Naive thymus-derived CD4-positive, alpha-beta T cell (primary cell): ENCODE measurements at regions of chr1 and their contacts with region 1.

Region 1: GRCh38 chr1:54488779-54489626 is 59.0 kb upstream of the ACOT11 start:
- DNase-seq: peak; percentile 54 to 88 (median 73)
- ATAC-seq: peak; percentile 82
- H3K4me3 ChIP-seq: peak overlapping the region; percentile 83
- H3K4me3 Mint-ChIP-seq: peak overlapping the region; percentile 85 to 95 (median 90)
- H3K27ac ChIP-seq: peak overlapping the region; percentile 75
- H3K27ac Mint-ChIP-seq: peak overlapping the region; percentile 51 to 93 (median 78)
- H3K4me1 ChIP-seq: peaks cover 25 to 33% of the 10 kb centered on the region in 2 donors
- H3K4me1 Mint-ChIP-seq: peaks cover 26 to 55% (median 41%) of the 10 kb centered on the region in 7 donors
- H3K27me3 ChIP-seq: no peaks in the 10 kb centered on the region
- H3K27me3 Mint-ChIP-seq: peaks cover 0 to 38% (median 0%) of the 10 kb centered on the region in 5 donors

Region 2: GRCh38 chr1:53837924-53838652 is 650.9 kb before region 1 on chr1 and contains the start of gene NDC1:
- CTCF ChIA-PET with region 1: no interaction called
- POLR2A ChIA-PET with region 1: no interaction called
- intact Hi-C with region 1: loop called in 1 of 2 experiments (anchors 5 kb)
- DNase-seq: peak; percentile 84 to 95 (median 92)
- ATAC-seq: peak; percentile 95
- H3K4me3 ChIP-seq: peak within 1 kb of the TSS; percentile 92
- H3K4me3 Mint-ChIP-seq: peak within 1 kb of the TSS; percentile 96 to 100 (median 99)
- H3K27ac ChIP-seq: peak within 1 kb of the TSS; percentile 95
- H3K27ac Mint-ChIP-seq: peak within 1 kb of the TSS; percentile 96 to 99 (median 98)
- H3K4me1 ChIP-seq: no peaks in the 10 kb centered on the region
- H3K4me1 Mint-ChIP-seq: peaks cover 10 to 41% (median 30%) of the 10 kb centered on the region in 7 donors
- H3K27me3 ChIP-seq: no peaks in the 10 kb centered on the region
- H3K27me3 Mint-ChIP-seq: no peaks in the 10 kb centered on the region
- total RNA-seq, gene NDC1: 6.9 to 20.2 (median 13.2) TPM

Region 3: GRCh38 chr1:54052934-54053744 is 435.9 kb before region 1 on chr1 and contains the starts of genes TCEANC2 and TMEM59:
- CTCF ChIA-PET with region 1: no interaction called
- POLR2A ChIA-PET with region 1: no interaction called
- intact Hi-C with region 1: loop called (anchors 1 kb)
- DNase-seq: peak; percentile 84 to 99 (median 98)
- ATAC-seq: peak; percentile 94
- H3K4me3 ChIP-seq: peak within 1 kb of the TSS; percentile 94
- H3K4me3 Mint-ChIP-seq: no peak within 1 kb of the TSS
- H3K27ac ChIP-seq: peak within 1 kb of the TSS; percentile 92
- H3K27ac Mint-ChIP-seq: no peak within 1 kb of the TSS
- H3K4me1 ChIP-seq: peaks cover 23 to 34% of the 10 kb centered on the region in 2 donors
- H3K4me1 Mint-ChIP-seq: peaks cover 27 to 62% (median 52%) of the 10 kb centered on the region in 7 donors
- H3K27me3 ChIP-seq: no peaks in the 10 kb centered on the region
- H3K27me3 Mint-ChIP-seq: no peaks in the 10 kb centered on the region
- total RNA-seq, gene TCEANC2: 6.3 to 15.1 (median 12.2) TPM
- total RNA-seq, gene TMEM59: 127 to 197 (median 183) TPM

Region 4: DNA sequence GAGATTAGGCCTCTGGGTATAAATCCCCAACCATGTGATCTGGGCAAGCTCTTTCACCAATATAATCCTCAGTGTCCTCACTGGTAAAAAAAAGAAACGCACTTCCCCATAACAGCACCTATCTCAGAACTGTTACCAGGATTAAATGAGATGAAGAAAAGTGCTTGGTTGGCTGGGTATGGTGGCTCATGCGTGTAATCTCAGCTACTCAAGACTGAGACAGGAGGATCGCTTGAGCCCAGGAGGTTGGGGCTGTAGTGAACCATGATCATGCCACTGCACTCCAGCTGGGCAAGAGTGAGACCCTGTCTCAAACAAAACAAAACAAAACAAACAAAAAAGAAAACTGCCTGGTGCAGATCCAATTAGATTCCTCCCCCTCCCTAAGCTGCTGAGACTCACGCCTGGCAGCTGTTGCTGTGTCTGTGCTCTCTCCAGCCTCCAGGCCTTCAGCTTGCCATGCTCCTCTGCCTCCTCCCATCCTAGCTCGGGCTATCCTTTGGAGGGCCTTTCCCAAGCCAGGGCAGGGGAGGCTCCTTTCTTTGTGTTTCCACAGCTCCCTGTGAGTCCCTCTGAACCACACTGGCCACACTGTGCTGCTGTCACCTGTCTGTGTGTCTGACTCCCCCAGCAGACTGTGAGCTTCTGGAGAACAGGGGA is 308.2 kb before region 1 on chr1:
- CTCF ChIA-PET with region 1: interaction called, 8 read pairs
- POLR2A ChIA-PET with region 1: no interaction called
- intact Hi-C with region 1: loop called (anchors 1 to 5 kb)
- DNase-seq: no peak
- ATAC-seq: no peak
- H3K4me3 ChIP-seq: no peak overlapping the region
- H3K4me3 Mint-ChIP-seq: no peak overlapping the region
- H3K27ac ChIP-seq: no peak overlapping the region
- H3K27ac Mint-ChIP-seq: peak overlapping the region in 1 of 9 donors; percentile 17
- H3K4me1 ChIP-seq: no peaks in the 10 kb centered on the region
- H3K4me1 Mint-ChIP-seq: no peaks in the 10 kb centered on the region
- H3K27me3 ChIP-seq: no peaks in the 10 kb centered on the region
- H3K27me3 Mint-ChIP-seq: no peaks in the 10 kb centered on the region

Region 5: DNA sequence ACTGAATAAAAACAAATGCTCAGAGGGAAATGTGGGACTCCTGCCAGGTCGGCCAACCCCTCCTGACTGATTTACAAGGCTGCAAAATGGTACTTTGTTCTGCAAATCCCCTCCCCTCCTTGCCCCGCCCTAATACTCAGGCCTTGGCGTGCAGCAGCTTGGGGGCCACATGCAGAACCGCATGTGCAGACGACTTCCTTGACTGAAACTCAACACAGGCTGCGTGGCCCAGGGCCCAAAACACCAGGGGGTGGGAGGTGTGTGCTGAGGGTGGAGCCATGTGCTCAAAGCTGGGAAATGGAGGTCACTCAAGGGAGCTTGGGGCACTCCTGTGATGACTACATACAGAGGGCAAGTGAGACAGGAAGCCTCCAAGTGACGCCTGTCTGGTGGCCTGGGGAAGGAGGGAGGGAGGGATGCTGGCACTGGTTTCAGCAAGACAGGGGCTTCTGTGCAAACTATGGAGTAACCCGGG is 201.8 kb before region 1 on chr1:
- CTCF ChIA-PET with region 1: interaction called, 4 read pairs
- POLR2A ChIA-PET with region 1: interaction called, 8 read pairs
- intact Hi-C with region 1: loop called (anchors 1 to 2 kb)
- DNase-seq: peak; percentile 21 to 82 (median 73)
- ATAC-seq: peak; percentile 76
- H3K4me3 ChIP-seq: peak overlapping the region; percentile 21
- H3K4me3 Mint-ChIP-seq: peak overlapping the region; percentile 79 to 90 (median 87)
- H3K27ac ChIP-seq: peak overlapping the region; percentile 85
- H3K27ac Mint-ChIP-seq: peak overlapping the region; percentile 87 to 99 (median 96)
- H3K4me1 ChIP-seq: peaks cover 6 to 90% of the 10 kb centered on the region in 2 donors
- H3K4me1 Mint-ChIP-seq: peaks cover 59 to 100% (median 94%) of the 10 kb centered on the region in 7 donors
- H3K27me3 ChIP-seq: no peaks in the 10 kb centered on the region
- H3K27me3 Mint-ChIP-seq: no peaks in the 10 kb centered on the region

Region 6: GRCh38 chr1:54464482-54465146 is 24.4 kb before region 1 on chr1:
- CTCF ChIA-PET with region 1: interaction called, 3 read pairs
- POLR2A ChIA-PET with region 1: interaction called, 8 read pairs
- intact Hi-C with region 1: loop called in 1 of 2 experiments (anchors 1 kb)
- DNase-seq: no peak
- ATAC-seq: peak; percentile 23
- H3K4me3 ChIP-seq: no peak overlapping the region
- H3K4me3 Mint-ChIP-seq: no peak overlapping the region
- H3K27ac ChIP-seq: no peak overlapping the region
- H3K27ac Mint-ChIP-seq: peak overlapping the region in 2 of 9 donors; percentile 8 to 13
- H3K4me1 ChIP-seq: peaks cover 27 to 31% of the 10 kb centered on the region in 2 donors
- H3K4me1 Mint-ChIP-seq: peaks cover 8 to 51% (median 41%) of the 10 kb centered on the region in 7 donors
- H3K27me3 ChIP-seq: no peaks in the 10 kb centered on the region
- H3K27me3 Mint-ChIP-seq: peaks cover 0 to 4% (median 0%) of the 10 kb centered on the region in 5 donors

Region 7: GRCh38 chr1:54604572-54605370 is 115.8 kb after region 1 on chr1:
- CTCF ChIA-PET with region 1: no interaction called
- POLR2A ChIA-PET with region 1: no interaction called
- intact Hi-C with region 1: no loop called
- DNase-seq: peak in 8 of 9 donors; percentile 15 to 47 (median 41)
- ATAC-seq: peak; percentile 52
- H3K4me3 ChIP-seq: no peak overlapping the region
- H3K4me3 Mint-ChIP-seq: peak overlapping the region in 6 of 10 donors; percentile 18 to 56 (median 41)
- H3K27ac ChIP-seq: no peak overlapping the region
- H3K27ac Mint-ChIP-seq: peak overlapping the region; percentile 33 to 86 (median 75)
- H3K4me1 ChIP-seq: peaks cover 0 to 14% of the 10 kb centered on the region in 2 donors
- H3K4me1 Mint-ChIP-seq: peaks cover 12 to 19% (median 15%) of the 10 kb centered on the region in 7 donors
- H3K27me3 ChIP-seq: no peaks in the 10 kb centered on the region
- H3K27me3 Mint-ChIP-seq: no peaks in the 10 kb centered on the region

Region 8: GRCh38 chr1:54764133-54764921 is 275.3 kb after region 1 on chr1 and contains the start of gene PARS2:
- CTCF ChIA-PET with region 1: no interaction called
- POLR2A ChIA-PET with region 1: no interaction called
- intact Hi-C with region 1: loop called in 1 of 2 experiments (anchors 1 kb)
- DNase-seq: peak; percentile 89 to 98 (median 97)
- ATAC-seq: peak; percentile 96
- H3K4me3 ChIP-seq: peak within 1 kb of the TSS; percentile 95
- H3K4me3 Mint-ChIP-seq: peak within 1 kb of the TSS; percentile 94 to 97 (median 96)
- H3K27ac ChIP-seq: peak within 1 kb of the TSS; percentile 83
- H3K27ac Mint-ChIP-seq: peak within 1 kb of the TSS; percentile 81 to 97 (median 93)
- H3K4me1 ChIP-seq: peaks cover 0 to 9% of the 10 kb centered on the region in 2 donors
- H3K4me1 Mint-ChIP-seq: peaks cover 14 to 26% (median 24%) of the 10 kb centered on the region in 7 donors
- H3K27me3 ChIP-seq: no peaks in the 10 kb centered on the region
- H3K27me3 Mint-ChIP-seq: no peaks in the 10 kb centered on the region
- total RNA-seq, gene PARS2: 0.66 to 7.6 (median 4.7) TPM